HEK293 (cell line): ENCODE measurements at regions of chr1 and their contacts with region 1.

Region 1: DNA sequence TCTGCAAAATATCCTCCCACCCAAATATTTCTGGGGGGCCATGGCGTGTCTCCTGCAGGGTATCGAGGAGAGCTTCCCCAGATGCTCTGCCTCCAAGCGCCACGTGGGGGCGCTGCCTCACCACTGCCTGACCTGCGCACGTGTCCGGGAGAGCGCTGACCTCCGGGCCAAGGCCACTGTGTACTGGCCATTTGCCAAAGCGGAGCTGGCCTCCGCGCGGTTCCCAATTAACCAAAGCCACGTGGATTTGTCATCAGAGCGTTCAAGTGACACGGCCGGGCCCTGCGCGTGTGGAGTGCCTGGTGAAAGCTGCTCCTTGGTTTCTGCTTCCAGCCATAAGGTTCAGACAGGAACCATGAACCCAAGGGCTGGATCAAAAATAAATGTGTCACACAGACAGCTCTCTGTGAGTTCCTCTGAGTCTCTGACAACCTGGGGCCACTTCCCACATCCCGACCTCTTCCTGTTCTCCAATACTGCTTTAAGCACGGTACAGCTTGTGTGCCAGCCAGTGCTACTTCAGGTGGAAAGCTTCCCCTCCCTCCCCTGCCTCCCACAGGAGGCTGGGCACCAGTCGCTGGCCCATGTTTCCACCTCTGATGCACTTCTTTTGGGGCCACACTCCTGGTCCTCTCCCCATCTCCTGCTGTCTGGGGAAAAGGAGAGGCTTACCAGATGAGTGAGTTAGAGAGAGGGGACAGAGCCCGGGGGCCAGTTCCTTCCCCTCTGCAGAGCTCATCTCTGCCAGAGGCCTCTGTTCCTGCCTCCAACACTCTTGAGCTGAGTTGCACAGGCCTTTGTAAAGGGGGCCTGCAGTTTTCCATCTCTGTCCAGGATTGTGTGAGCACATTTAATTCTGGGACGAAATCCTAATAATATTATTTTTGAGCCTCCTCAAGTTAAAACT is 26.1 kb downstream of the ZP4 start:
- H3K4me3 ChIP-seq: peak overlapping the region; percentile 14
- H3K27ac ChIP-seq: no peak overlapping the region
- H3K4me1 ChIP-seq: no peaks in the 10 kb centered on the region
- CTCF ChIP-seq: peak; percentile 93

Region 2: DNA sequence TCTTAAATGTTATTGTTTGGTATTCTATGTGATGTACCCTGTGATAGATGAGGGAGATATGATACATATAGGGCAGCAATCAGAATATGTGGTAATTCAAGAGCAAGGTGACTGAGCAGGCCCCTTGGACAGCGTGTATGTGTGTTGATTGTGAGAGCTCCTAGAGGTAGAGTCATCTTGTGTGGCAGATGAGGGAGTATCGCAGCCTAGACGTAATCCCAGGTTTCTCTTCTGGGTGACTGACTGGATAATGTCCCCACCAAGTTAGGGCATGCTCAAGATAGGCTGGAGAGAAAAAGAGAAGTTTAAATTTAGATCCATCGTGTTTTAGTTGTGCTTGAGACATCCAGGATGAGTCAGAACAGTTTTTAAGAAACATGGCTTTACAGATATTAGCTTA is 159.1 kb before region 1 on chr1:
- CTCF ChIA-PET with region 1: no interaction called
- POLR2A ChIA-PET with region 1: no interaction called
- H3K4me3 ChIP-seq: no peak overlapping the region
- H3K27ac ChIP-seq: no peak overlapping the region
- H3K4me1 ChIP-seq: no peaks in the 10 kb centered on the region
- CTCF ChIP-seq: no peak

Region 3: GRCh38 chr1:237851210-237851845 is 13.3 kb before region 1 on chr1:
- CTCF ChIA-PET with region 1: interaction called, 120 read pairs
- POLR2A ChIA-PET with region 1: interaction called, 3 read pairs
- H3K4me3 ChIP-seq: no peak overlapping the region
- H3K27ac ChIP-seq: no peak overlapping the region
- H3K4me1 ChIP-seq: no peaks in the 10 kb centered on the region
- CTCF ChIP-seq: peak; percentile 30; the same call in 1 of the 2 replicates

Region 4: DNA sequence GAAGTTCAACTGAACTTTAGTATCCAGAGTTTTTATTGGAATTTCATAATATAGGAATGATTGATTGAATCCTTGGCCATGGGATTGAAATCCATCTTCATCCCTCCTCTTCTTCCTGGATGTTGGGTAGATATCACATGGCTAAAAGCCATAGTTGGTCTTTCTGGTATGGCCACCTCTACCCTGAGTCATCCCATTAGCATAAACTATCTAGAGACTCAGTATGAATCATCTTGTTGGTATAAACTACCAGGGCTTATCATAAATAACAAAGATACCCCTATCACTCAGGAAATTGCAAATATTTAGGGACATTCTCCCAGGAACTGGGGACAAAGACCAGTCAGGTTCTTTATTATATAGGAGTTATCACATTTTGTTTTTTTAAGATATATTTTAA is 47.3 kb after region 1 on chr1:
- CTCF ChIA-PET with region 1: interaction called, 13 read pairs
- POLR2A ChIA-PET with region 1: no interaction called
- H3K4me3 ChIP-seq: no peak overlapping the region
- H3K27ac ChIP-seq: no peak overlapping the region
- H3K4me1 ChIP-seq: no peaks in the 10 kb centered on the region
- CTCF ChIP-seq: no peak

Region 5: GRCh38 chr1:237938553-237938952 is 74.0 kb after region 1 on chr1:
- CTCF ChIA-PET with region 1: interaction called, 57 read pairs
- POLR2A ChIA-PET with region 1: no interaction called
- H3K4me3 ChIP-seq: no peak overlapping the region
- H3K27ac ChIP-seq: no peak overlapping the region
- H3K4me1 ChIP-seq: no peaks in the 10 kb centered on the region
- CTCF ChIP-seq: 0 out of 2 replicates have a peak, but pooled peaks have one; percentile 31

Region 6: GRCh38 chr1:238239343-238239742 is 374.8 kb after region 1 on chr1:
- CTCF ChIA-PET with region 1: interaction called, 16 read pairs
- POLR2A ChIA-PET with region 1: no interaction called
- H3K4me3 ChIP-seq: no peak overlapping the region
- H3K27ac ChIP-seq: no peak overlapping the region
- H3K4me1 ChIP-seq: no peaks in the 10 kb centered on the region
- CTCF ChIP-seq: no peak